Activated B cell treated with CpG ODN at 0.5 μM for 24 hours (primary cell): ENCODE measurements at regions of chr6 and their contacts with region 1.

Region 1: DNA sequence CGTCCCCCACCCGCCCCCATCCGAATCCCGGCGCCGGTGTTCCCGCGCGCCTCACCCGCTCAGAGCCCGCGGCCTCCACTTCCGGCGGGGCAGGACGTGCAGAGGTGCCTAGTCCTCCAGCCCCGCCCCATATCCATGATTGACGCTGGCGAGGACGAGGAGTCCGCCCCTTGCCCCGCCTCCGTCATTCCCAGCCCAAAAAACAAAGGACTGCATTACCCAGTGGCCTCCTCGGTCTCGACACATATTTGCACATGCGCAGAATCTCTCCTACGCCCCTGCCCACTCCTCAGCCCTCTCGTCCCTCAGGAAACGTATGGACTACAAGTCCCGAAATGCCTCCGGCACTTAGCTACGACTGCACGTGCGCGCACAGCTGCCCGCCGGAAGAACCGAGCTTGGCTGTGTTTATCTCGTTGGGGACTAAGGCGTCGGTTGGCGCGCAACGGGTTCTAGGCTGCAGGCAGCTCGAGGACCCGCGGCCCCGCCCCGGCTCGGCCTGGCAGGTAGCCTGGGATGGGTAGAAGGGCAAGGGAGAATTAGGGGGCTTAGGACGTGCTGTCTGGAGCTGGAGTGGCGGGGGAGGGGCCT is at the starts of genes KLHDC3 and MEA1:
- DNase-seq: peak; percentile 94
- ATAC-seq: peak; percentile 93
- H3K4me3 Mint-ChIP-seq: peak within 1 kb of the TSS; percentile 97
- H3K27ac Mint-ChIP-seq: peak within 1 kb of the TSS; percentile 89
- H3K4me1 Mint-ChIP-seq: peaks cover 51% of the 10 kb centered on the region
- H3K27me3 Mint-ChIP-seq: no peaks in the 10 kb centered on the region
- CTCF ChIP-seq: no peak
- total RNA-seq, gene KLHDC3: 36.4 and 36.7 TPM in 2 replicates
- total RNA-seq, gene MEA1: 44.4 and 48.3 TPM in 2 replicates

Region 2: DNA sequence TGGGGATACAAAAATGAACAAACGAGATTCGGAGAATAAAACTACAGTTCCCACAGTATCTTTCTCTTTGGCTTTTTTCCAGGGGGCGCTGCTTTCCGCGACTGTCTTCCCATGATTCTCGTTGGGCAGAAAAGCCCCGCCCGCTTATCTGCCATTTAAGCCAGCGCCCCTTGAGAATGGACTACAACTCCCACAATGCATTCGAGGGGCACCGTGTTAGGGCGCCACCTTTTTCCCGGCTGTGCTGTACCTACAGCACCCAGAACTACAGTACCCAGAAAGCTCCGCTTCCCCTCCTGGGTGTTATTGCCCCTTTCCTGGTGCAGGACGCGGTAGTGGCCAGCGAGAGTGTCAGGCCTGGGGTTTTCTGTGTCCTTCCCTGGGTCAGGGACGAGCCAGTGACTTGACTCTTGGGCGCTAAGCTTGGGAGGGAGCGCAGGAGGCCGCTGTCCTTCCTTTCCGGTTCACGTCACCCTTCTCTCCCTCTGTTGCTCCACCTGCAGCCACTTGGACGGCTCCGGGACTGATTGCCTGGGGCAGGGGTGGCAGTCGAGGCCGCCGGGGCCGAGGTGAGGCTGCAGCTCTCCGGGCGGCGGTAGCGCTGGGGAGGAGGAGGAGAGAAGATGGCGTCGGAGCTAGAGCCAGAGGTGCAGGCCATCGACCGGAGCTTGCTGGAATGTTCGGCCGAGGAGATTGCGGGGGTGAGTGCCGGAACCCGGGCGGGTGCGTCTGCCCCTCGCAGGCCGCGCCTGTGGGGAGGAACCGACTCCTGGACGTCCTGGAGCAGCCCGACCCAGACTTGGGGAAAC is 450.0 kb before region 1 on chr6 and contains the start of gene UBR2:
- CTCF ChIA-PET with region 1: no interaction called
- POLR2A ChIA-PET with region 1: no interaction called
- intact Hi-C with region 1: loop called (anchors 10 kb)
- DNase-seq: peak; percentile 73
- ATAC-seq: peak; percentile 96
- H3K4me3 Mint-ChIP-seq: peak within 1 kb of the TSS; percentile 92
- H3K27ac Mint-ChIP-seq: peak within 1 kb of the TSS; percentile 92
- H3K4me1 Mint-ChIP-seq: peaks cover 43% of the 10 kb centered on the region
- H3K27me3 Mint-ChIP-seq: no peaks in the 10 kb centered on the region
- CTCF ChIP-seq: no peak
- total RNA-seq, gene UBR2: 34.3 and 40.8 TPM in 2 replicates

Region 3: GRCh38 chr6:42901536-42901957 is 112.4 kb before region 1 on chr6:
- CTCF ChIA-PET with region 1: interaction called, 3 read pairs
- POLR2A ChIA-PET with region 1: no interaction called
- intact Hi-C with region 1: loop called (anchors 1 kb)
- DNase-seq: no peak
- ATAC-seq: peak; percentile 100
- H3K4me3 Mint-ChIP-seq: no peak overlapping the region
- H3K27ac Mint-ChIP-seq: no peak overlapping the region
- H3K4me1 Mint-ChIP-seq: peaks cover 12% of the 10 kb centered on the region
- H3K27me3 Mint-ChIP-seq: no peaks in the 10 kb centered on the region
- CTCF ChIP-seq: peak; percentile 36

Region 4: GRCh38 chr6:42984001-42984923 is 29.7 kb before region 1 on chr6 and contains the start of gene PPP2R5D:
- CTCF ChIA-PET with region 1: interaction called, 3 read pairs
- POLR2A ChIA-PET with region 1: interaction called, 29 read pairs
- intact Hi-C with region 1: loop called (anchors 1 kb)
- DNase-seq: peak; percentile 88
- ATAC-seq: peak; percentile 95
- H3K4me3 Mint-ChIP-seq: peak within 1 kb of the TSS; percentile 85
- H3K27ac Mint-ChIP-seq: peak within 1 kb of the TSS; percentile 88
- H3K4me1 Mint-ChIP-seq: peaks cover 44% of the 10 kb centered on the region
- H3K27me3 Mint-ChIP-seq: no peaks in the 10 kb centered on the region
- CTCF ChIP-seq: no peak
- total RNA-seq, gene PPP2R5D: 26.7 and 26.8 TPM in 2 replicates

Region 5: DNA sequence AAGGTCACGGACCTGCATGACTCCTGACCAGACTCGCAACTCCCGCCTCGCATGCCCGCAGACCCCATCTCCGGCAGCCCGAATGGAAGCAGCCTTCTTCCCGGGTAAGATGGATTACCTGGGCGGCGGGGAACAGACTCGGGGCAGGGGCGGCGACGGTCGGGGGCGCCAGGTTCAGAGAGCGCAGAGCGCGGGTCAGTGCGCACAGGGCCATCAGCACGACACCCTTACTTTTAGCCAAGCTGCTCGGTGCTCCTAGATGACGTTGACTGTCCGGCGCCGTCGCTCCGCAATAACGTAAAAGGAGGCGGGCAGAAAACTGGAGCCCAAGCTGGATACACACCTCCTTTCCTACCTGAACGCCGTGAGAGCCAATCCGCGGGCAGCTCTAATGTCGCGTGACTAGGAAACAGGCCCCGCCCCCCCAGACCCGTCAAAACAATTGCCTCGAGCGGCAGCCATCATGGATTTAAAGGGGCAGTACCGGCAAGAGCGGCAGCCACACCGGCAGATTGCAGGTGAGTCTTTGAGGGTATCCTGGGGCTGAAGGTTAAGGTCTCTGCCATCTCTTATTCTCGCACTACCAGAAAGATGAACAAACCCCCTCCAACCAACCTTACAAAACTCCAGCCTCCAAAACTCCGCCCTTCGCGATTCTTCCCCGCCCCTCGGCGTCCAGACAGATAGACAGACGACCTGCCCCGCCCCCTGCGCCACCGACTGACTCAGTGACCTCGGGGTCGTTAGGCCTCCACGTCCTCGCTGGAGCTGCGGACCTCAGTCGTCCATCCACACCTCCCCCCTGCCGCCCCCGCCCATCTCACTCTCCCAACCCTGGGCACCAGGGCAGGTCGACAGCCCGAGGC is 45.5 kb after region 1 on chr6 and contains the starts of genes KLC4 and MRPL2:
- CTCF ChIA-PET with region 1: interaction called, 5 read pairs
- POLR2A ChIA-PET with region 1: interaction called, 20 read pairs
- intact Hi-C with region 1: loop called (anchors 1 kb)
- DNase-seq: peak; percentile 94
- ATAC-seq: peak; percentile 97
- H3K4me3 Mint-ChIP-seq: peak within 1 kb of the TSS; percentile 95
- H3K27ac Mint-ChIP-seq: peak within 1 kb of the TSS; percentile 97
- H3K4me1 Mint-ChIP-seq: peaks cover 38% of the 10 kb centered on the region
- H3K27me3 Mint-ChIP-seq: no peaks in the 10 kb centered on the region
- CTCF ChIP-seq: no peak
- total RNA-seq, gene KLC4: 17.0 and 19.8 TPM in 2 replicates
- total RNA-seq, gene MRPL2: 43.9 and 47.8 TPM in 2 replicates

Region 6: DNA sequence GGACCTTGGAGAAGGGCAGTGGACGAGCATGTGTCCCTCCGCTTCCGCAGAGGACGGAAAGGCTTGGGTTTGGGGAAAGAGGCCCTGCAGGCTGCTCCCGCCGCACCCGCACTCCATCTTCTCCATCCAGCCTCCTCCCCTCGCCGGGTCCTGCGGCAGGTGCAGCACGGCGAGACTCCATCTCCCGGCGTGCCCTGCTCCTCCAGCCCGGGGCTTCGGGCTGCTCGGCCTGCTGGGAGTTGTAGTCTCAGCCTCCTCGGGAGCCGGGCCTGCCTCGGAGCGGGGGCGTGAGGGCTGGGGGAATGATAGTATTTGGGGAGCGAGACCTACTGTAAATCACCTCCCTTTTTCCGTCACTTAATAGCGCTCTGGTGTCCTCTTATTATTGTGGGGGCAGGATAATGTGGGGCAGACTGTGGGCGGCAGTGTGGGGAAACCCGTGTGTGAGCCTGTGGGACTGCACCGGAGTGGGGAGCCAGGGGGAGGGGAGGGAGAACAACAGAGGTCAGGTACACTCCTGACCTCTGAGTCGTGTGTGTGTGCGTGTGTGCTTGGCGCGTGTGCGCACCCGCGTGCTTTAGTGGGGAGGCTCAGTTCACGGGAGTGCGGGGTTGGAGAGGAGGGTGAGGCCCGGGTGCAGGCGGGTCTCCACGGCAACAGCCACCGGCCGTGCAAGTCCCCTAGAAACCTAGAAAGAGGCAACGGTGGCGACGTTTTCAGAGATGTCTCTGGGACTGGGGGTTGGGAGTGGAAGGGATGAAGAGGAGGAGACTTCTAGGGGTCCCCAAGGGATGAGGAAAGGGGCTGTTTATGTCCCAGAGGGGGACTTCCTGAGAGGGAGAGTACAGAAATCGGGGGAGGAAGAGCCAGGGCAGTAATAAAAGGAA is 233.4 kb after region 1 on chr6:
- CTCF ChIA-PET with region 1: no interaction called
- POLR2A ChIA-PET with region 1: no interaction called
- intact Hi-C with region 1: loop called (anchors 1 kb)
- DNase-seq: peak; percentile 73
- ATAC-seq: peak; percentile 96
- H3K4me3 Mint-ChIP-seq: no peak overlapping the region
- H3K27ac Mint-ChIP-seq: peak overlapping the region; percentile 76
- H3K4me1 Mint-ChIP-seq: peaks cover 29% of the 10 kb centered on the region
- H3K27me3 Mint-ChIP-seq: peaks cover 17% of the 10 kb centered on the region
- CTCF ChIP-seq: no peak